ENCODE measurements at regions of chr1 and their contacts with region 1.

Region 1: DNA sequence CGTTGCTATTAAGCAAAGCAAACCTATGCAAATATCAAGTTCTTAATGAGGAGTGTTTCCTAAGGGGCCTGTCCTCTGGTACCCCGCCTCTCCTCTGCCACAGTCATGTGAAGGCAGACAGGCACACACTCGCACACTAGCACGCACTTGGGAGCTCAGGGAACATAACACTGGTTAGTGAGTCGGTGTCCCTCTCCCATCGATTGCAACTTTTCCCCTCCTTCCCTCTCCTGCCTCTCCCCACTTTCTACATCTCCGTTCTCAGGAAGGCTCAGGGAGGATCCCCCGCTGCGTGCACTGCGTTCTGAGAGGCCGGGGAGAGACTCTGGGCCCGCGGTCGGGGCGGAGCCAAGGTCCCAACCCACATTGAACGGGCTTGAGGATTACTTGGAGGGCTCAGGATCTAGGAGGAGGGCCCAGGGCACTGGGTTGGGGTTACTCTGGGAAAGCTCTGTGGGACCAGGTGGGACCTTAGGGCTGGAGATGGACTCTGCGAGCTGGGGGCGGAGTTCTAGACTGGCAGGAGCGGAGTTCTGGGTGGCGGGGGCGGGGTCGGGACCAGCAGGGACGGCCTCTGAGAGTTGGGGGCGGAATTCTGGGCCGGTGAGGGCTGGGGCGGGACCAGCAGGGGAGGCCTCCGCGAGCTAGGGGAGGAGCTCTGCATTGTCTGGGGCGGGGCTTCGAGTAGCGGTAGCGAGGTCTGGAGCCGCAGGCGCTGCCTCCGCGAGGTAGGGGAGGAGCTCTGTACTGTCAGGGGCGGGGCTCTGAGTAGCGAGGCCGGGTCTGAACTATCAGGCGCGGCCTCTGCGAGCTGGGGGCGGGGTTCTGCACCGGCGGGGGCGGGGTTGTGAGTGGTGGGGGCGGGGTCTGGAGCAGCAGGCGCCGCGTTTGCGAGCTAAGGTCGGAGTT is 533 bp upstream of the LEPR start:
- DNase-seq: peak; percentile 97
- H3K4me3 Mint-ChIP-seq: no peak overlapping the region
- H3K27ac Mint-ChIP-seq: no peak overlapping the region
- H3K4me1 Mint-ChIP-seq: peaks cover 28% of the 10 kb centered on the region
- H3K27me3 Mint-ChIP-seq: no peaks in the 10 kb centered on the region
- CTCF ChIP-seq: no peak

Region 2: DNA sequence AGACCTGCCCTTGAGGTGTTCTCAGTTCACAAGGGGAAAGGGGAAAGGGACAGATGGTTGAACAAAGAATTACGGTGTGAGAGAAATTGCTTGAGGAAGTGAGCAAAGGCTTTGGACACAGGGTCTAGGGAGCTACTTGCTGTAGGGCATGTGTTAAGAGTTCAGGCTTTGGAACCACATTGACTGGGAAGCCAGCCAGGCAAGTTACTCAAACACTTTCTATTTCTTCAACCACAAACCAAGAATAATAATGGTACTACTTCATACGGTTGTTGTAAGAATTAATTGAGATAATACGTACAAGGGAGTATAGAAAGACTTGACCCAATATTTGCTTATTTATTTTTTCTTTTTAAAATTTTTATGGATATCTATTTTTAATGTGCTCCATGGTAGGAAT is 245.3 kb before region 1 on chr1:
- CTCF ChIA-PET with region 1: interaction called, 5 read pairs
- POLR2A ChIA-PET with region 1: interaction called, 5 read pairs
- intact Hi-C with region 1: loop called (anchors 5 kb)
- DNase-seq: peak; percentile 98
- H3K4me3 Mint-ChIP-seq: peak overlapping the region; percentile 52
- H3K27ac Mint-ChIP-seq: peak overlapping the region; percentile 90
- H3K4me1 Mint-ChIP-seq: peaks cover 67% of the 10 kb centered on the region
- H3K27me3 Mint-ChIP-seq: no peaks in the 10 kb centered on the region
- CTCF ChIP-seq: no peak

Region 3: DNA sequence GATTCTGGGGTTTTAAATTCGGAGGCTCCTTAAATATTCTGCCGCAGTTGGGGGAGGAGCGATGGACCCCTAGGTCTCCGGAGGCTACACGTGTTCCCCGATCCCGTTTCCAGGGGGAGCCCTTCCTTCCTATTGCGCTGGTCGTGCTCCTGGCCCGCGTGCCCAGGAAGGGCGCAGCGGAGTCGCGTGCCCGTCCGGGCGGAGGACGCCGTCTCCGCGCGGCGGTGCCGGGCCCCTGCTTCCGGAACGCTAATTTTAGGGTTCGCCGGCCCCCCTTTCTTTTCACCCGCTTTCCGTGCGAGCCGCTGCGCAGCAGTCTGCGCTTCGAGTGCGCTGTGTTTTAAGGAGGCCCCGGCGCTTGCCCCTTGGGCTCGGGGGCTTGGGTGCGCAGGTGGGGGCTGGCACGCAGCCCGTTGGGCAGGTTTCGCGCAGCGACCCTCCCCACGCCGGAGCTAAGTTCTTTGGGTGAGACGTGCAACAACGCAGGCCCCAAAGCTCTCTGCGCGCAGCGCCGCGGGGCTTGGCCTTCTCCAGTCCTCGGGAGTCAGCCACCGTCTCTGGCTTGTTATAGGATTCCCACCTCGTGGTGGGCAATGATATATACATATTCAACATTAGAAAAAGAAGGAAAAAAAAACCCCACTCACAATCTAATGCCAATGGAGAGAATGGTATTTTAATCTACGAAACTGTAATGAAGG is 154.1 kb before region 1 on chr1:
- CTCF ChIA-PET with region 1: interaction called, 5 read pairs
- POLR2A ChIA-PET with region 1: interaction called, 38 read pairs
- intact Hi-C with region 1: no loop called
- DNase-seq: peak; percentile 42
- H3K4me3 Mint-ChIP-seq: peak overlapping the region; percentile 60
- H3K27ac Mint-ChIP-seq: no peak overlapping the region
- H3K4me1 Mint-ChIP-seq: peaks cover 9% of the 10 kb centered on the region
- H3K27me3 Mint-ChIP-seq: no peaks in the 10 kb centered on the region
- CTCF ChIP-seq: no peak

Region 4: GRCh38 chr1:65339866-65340468 is 80.0 kb before region 1 on chr1:
- CTCF ChIA-PET with region 1: interaction called, 6 read pairs
- POLR2A ChIA-PET with region 1: interaction called, 7 read pairs
- intact Hi-C with region 1: loop called (anchors 1 kb)
- DNase-seq: peak; percentile 55
- H3K4me3 Mint-ChIP-seq: no peak overlapping the region
- H3K27ac Mint-ChIP-seq: no peak overlapping the region
- H3K4me1 Mint-ChIP-seq: peaks cover 23% of the 10 kb centered on the region
- H3K27me3 Mint-ChIP-seq: no peaks in the 10 kb centered on the region
- CTCF ChIP-seq: no peak

Region 5: DNA sequence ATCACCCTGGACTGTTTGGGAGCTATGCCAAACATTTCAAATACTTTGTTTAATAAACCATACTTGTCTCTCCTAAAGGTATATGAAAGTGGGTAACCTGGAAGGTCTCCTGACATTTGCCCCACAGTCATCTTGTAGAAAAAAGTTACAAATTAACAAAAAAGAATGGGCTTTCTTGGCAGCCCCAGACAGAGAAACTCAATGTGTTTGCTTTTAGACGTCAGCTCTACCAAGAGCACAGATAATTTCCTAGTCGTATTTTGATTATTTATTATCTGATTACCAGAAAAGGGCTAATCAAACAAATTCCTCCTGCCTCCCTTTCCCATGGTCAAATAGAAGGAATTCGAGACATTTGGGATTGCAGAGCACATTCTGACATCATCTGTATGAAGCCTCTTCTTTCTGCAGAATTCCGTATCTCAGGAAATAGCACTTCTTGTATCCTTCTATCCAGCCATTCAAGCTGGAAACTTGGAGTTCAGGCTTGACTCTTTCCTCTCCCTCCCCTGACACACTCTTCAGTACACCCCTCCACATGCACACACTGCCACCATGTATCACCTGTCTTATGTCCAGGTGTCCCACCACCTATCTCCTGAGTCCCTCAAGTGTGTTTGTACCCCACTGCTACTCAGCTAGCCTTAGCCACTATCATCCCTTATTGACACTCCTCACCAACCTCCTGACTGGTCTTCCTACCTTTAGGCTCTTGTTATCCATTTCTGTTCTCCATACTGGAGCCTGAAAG is 42.3 kb before region 1 on chr1:
- CTCF ChIA-PET with region 1: no interaction called
- POLR2A ChIA-PET with region 1: no interaction called
- intact Hi-C with region 1: no loop called
- DNase-seq: no peak
- H3K4me3 Mint-ChIP-seq: no peak overlapping the region
- H3K27ac Mint-ChIP-seq: no peak overlapping the region
- H3K4me1 Mint-ChIP-seq: peaks cover 4% of the 10 kb centered on the region
- H3K27me3 Mint-ChIP-seq: no peaks in the 10 kb centered on the region
- CTCF ChIP-seq: no peak

Region 6: DNA sequence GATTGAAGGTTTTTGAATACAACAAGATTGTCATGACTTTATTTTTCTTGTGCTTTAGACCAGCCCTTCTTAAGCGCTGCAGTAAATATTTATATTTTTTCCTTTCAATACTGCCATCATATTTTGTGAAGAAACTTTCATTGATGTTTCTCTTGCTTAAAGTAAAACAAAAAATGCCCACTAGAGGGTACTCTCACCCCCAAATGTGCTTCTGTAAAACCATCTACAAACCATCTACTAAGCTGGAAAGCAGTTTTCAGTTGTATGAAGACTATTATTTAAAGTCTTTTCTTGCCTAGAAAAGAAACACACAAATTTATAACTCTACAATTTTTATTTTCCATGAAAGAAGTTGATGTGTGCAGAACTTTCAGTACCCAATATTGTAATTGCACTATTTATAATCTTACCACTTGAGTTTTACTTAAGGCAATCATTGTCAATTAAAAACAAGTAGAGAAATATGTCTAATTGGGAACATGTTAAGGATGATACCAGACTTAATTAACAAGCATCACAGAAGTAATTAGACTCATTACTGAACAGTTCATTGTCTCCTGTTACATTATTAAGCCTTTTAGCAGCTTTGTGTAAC is 11.3 kb after region 1 on chr1:
- CTCF ChIA-PET with region 1: interaction called, 8 read pairs
- POLR2A ChIA-PET with region 1: interaction called, 144 read pairs
- intact Hi-C with region 1: no loop called
- DNase-seq: peak; percentile 60
- H3K4me3 Mint-ChIP-seq: peak overlapping the region; percentile 76
- H3K27ac Mint-ChIP-seq: peak overlapping the region; percentile 93
- H3K4me1 Mint-ChIP-seq: peaks cover 44% of the 10 kb centered on the region
- H3K27me3 Mint-ChIP-seq: no peaks in the 10 kb centered on the region
- CTCF ChIP-seq: peak; percentile 44

Region 7: GRCh38 chr1:66929999-66930822 is 1510.3 kb after region 1 on chr1:
- CTCF ChIA-PET with region 1: no interaction called
- POLR2A ChIA-PET with region 1: no interaction called
- intact Hi-C with region 1: loop called (anchors 10 kb)
- DNase-seq: peak; percentile 94
- H3K4me3 Mint-ChIP-seq: peak overlapping the region; percentile 84
- H3K27ac Mint-ChIP-seq: peak overlapping the region; percentile 99
- H3K4me1 Mint-ChIP-seq: peaks cover 29% of the 10 kb centered on the region
- H3K27me3 Mint-ChIP-seq: no peaks in the 10 kb centered on the region
- CTCF ChIP-seq: no peak

Measured in MCF 10A (cell line).